Caco-2 (cell line): ENCODE measurements at regions of chr5 and their contacts with region 1.

Region 1: GRCh38 chr5:138282920-138283742 is 8.7 kb upstream of the GFRA3 start:
- DNase-seq: peak; percentile 78
- H3K4me3 ChIP-seq: no peak overlapping the region
- H3K4me3 Mint-ChIP-seq: no peak overlapping the region
- H3K27ac Mint-ChIP-seq: no peak overlapping the region
- H3K4me1 ChIP-seq: no peaks in the 10 kb centered on the region; the same call in 1 of the 2 replicates
- H3K4me1 Mint-ChIP-seq: no peaks in the 10 kb centered on the region
- H3K27me3 ChIP-seq: no peaks in the 10 kb centered on the region; the same call in 1 of the 2 replicates
- H3K27me3 Mint-ChIP-seq: no peaks in the 10 kb centered on the region
- CTCF ChIP-seq: peak; percentile 71 to 89

Region 2: DNA sequence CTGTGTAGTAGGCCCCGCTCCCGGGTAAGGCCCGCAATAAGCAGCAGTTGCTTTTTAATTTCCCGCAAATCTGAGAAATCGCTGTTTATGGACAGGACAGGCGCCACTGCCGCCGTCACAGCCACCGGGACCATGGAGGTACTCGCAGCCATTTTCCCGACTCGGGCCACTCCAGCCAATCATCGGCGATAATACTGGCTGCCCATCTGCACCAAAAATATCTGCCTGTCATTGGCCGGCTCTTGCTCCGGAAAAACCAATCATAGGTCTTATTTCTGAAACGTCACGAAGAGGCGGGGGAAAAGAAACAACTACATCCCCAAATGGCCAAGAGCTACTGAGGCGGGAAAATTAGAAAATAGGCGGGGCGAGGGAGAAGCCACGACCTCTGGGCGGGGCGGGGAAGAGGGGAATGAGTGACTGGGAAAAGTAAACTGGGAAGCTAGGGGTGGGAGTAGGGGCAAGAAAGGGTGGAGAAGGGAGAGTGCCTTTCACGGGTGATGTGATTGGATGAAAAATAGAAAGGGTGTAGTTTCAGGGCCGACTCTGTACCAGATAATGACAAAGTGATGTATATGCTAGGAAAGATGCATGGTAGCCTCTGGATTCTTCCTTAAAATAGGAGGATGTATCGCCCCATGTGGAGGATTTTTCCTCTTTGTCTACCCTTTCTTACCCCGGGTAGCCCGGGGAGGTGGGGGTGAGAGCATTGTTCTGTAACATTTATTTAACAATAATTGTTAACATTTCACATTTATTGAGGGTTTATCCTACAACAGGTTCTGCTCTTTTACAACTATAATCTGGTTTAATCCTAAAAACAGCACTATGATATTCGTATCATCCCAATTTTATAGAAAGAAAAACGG is 69.7 kb before region 1 on chr5 and contains the start of gene CDC23:
- CTCF ChIA-PET with region 1: interaction called, 15 read pairs
- POLR2A ChIA-PET with region 1: interaction called, 11 read pairs
- intact Hi-C with region 1: loop called (anchors 2 kb)
- DNase-seq: peak; percentile 96 to 97
- H3K4me3 ChIP-seq: peak within 1 kb of the TSS; percentile 99
- H3K4me3 Mint-ChIP-seq: peak within 1 kb of the TSS; percentile 99
- H3K27ac Mint-ChIP-seq: peak within 1 kb of the TSS; percentile 99
- H3K4me1 ChIP-seq: no peaks in the 10 kb centered on the region
- H3K4me1 Mint-ChIP-seq: no peaks in the 10 kb centered on the region
- H3K27me3 ChIP-seq: no peaks in the 10 kb centered on the region
- H3K27me3 Mint-ChIP-seq: no peaks in the 10 kb centered on the region
- CTCF ChIP-seq: no peak
- total RNA-seq, gene CDC23: 52.9 and 60.7 TPM in 2 replicates

Region 3: DNA sequence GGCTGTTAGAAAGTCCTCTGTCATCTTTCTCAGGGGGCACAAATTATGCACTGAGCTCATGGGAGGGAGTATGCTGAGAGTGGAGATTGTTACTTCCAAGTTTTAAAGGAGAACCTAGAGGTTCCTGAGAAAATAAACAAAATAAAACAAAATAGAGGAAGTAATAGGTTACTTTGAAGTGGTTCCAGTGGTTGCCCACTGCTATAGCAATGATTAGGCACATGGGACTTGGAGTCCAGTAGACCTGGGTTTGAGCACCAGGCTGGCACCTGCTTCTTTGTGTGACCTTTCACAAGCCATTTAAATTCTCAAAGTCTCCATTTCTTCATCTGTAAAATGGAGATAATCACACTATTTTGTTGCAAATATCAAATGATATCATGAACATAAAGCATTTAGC is 56.2 kb before region 1 on chr5:
- CTCF ChIA-PET with region 1: interaction called, 26 read pairs
- POLR2A ChIA-PET with region 1: no interaction called
- intact Hi-C with region 1: loop called (anchors 1 kb)
- DNase-seq: no peak
- H3K4me3 ChIP-seq: no peak overlapping the region
- H3K4me3 Mint-ChIP-seq: no peak overlapping the region
- H3K27ac Mint-ChIP-seq: no peak overlapping the region
- H3K4me1 ChIP-seq: no peaks in the 10 kb centered on the region
- H3K4me1 Mint-ChIP-seq: peaks cover 14% of the 10 kb centered on the region
- H3K27me3 ChIP-seq: no peaks in the 10 kb centered on the region
- H3K27me3 Mint-ChIP-seq: no peaks in the 10 kb centered on the region
- CTCF ChIP-seq: no peak

Region 4: GRCh38 chr5:138241688-138242571 is 41.2 kb before region 1 on chr5:
- CTCF ChIA-PET with region 1: interaction called, 3 read pairs
- POLR2A ChIA-PET with region 1: no interaction called
- intact Hi-C with region 1: loop called (anchors 5 kb)
- DNase-seq: peak; percentile 58 to 68
- H3K4me3 ChIP-seq: peak overlapping the region; percentile 38
- H3K4me3 Mint-ChIP-seq: peak overlapping the region; percentile 69
- H3K27ac Mint-ChIP-seq: no peak overlapping the region
- H3K4me1 ChIP-seq: peaks cover 15% of the 10 kb centered on the region; the same call in 1 of the 2 replicates
- H3K4me1 Mint-ChIP-seq: peaks cover 17% of the 10 kb centered on the region
- H3K27me3 ChIP-seq: no peaks in the 10 kb centered on the region
- H3K27me3 Mint-ChIP-seq: peaks cover 4% of the 10 kb centered on the region
- CTCF ChIP-seq: no peak

Region 5: DNA sequence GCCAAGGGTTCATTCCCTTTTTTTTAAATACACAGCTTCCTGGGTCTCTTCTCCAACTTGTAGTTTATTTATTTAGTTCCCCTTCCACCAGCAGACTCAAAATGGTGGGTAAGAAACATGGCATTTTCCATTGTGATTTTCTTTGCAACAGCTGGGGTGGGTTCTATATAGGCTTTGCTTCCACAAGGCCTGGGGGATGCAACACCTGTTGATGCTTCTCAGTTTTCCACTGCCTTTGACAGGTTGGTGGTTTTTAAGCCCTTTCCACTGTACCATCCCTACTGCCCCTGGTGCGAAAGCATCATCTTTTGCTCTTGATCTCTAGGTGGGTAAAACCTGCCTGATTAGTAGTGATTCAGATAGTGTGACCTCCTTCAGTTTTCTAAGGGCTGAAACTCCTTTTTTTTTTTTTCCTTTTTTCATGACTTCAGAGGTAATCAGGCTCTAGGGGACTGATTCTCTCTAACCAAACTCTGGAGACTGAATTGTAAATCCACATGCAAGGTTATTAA is 77.9 kb after region 1 on chr5:
- CTCF ChIA-PET with region 1: no interaction called
- POLR2A ChIA-PET with region 1: no interaction called
- intact Hi-C with region 1: no loop called
- DNase-seq: no peak
- H3K4me3 ChIP-seq: no peak overlapping the region
- H3K4me3 Mint-ChIP-seq: no peak overlapping the region
- H3K27ac Mint-ChIP-seq: no peak overlapping the region
- H3K4me1 ChIP-seq: no peaks in the 10 kb centered on the region
- H3K4me1 Mint-ChIP-seq: no peaks in the 10 kb centered on the region
- H3K27me3 ChIP-seq: no peaks in the 10 kb centered on the region
- H3K27me3 Mint-ChIP-seq: no peaks in the 10 kb centered on the region
- CTCF ChIP-seq: no peak